Natural killer cell (primary cell): ENCODE measurements at regions of chr17 and their contacts with region 1.

Region 1: DNA sequence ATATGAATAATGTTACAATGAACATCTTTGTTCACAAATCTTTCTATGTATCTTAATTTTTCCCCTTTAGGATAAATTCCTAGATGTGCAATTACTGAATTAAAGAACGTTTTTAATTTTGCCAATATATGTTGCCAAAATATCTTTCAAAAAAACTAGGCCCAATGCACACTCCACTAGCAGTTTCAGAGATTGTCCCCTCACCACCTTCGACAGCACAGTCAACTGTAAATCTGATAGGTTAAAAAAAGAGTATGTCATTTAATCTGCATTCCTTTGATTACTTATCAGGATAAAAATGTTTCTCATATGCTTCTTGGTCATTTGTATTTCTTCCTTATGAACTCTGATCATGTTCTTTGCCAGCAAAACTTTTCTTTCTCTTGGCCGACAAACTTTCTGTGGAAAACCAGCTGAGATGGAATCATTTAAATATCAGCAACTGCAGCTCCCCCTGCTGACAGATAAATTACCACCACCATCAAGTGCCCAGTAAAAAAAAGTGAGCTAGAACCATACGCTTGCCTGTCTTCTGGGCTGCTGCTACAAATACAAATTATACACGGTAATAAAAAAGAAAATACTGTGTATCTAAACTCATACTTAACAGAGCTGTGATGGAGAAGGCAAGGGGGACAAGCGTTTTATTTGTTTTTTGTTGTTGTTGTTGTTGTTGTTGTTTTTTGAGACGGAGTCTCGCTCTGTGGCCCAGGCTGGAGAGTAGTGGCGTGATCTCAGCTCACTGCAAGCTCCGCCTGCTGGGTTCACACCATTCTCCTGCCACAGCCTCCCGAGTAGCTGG is 19.6 kb upstream of the KANSL1 start:
- DNase-seq: peak; percentile 38 to 91
- ATAC-seq: peak; percentile 84 to 98 (median 94)
- H3K4me3 ChIP-seq: no peak overlapping the region
- H3K4me3 Mint-ChIP-seq: peak overlapping the region; percentile 79
- H3K27ac ChIP-seq: peak overlapping the region; percentile 51
- H3K27ac Mint-ChIP-seq: peak overlapping the region; percentile 79 to 90
- H3K4me1 ChIP-seq: no peaks in the 10 kb centered on the region
- H3K4me1 Mint-ChIP-seq: peaks cover 14 to 18% of the 10 kb centered on the region in 2 donors
- H3K27me3 ChIP-seq: no peaks in the 10 kb centered on the region
- H3K27me3 Mint-ChIP-seq: no peaks in the 10 kb centered on the region
- CTCF ChIP-seq: peak; percentile 75

Region 2: DNA sequence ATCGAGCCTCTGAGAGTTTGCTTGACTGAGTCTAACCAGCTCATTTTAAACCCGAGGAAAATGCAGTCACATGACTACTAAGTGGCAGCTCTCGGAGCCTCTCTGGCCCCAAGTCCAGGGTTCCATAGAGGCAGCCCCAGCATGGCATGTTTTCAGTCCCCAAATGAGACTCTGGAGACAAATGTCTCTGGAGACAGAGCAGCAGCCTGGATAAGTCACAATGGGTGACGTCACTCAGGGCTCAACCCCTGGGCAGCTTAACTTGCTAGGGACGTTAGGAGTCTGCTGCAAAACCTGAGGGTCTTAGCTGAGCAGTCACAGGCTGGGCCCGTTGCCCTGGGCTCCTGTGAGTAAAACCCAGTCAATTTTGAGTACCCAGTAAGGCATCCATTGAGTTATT is 220.7 kb before region 1 on chr17:
- intact Hi-C with region 1: no loop called
- DNase-seq: no peak
- ATAC-seq: no peak
- H3K4me3 ChIP-seq: no peak overlapping the region
- H3K4me3 Mint-ChIP-seq: no peak overlapping the region
- H3K27ac ChIP-seq: no peak overlapping the region
- H3K27ac Mint-ChIP-seq: no peak overlapping the region
- H3K4me1 ChIP-seq: no peaks in the 10 kb centered on the region
- H3K4me1 Mint-ChIP-seq: no peaks in the 10 kb centered on the region
- H3K27me3 ChIP-seq: no peaks in the 10 kb centered on the region
- H3K27me3 Mint-ChIP-seq: peaks cover 0 to 4% of the 10 kb centered on the region in 2 donors
- CTCF ChIP-seq: no peak

Region 3: GRCh38 chr17:46002311-46002972 is 210.4 kb before region 1 on chr17:
- intact Hi-C with region 1: loop called (anchors 1 kb)
- DNase-seq: peak; percentile 72 to 85
- ATAC-seq: peak; percentile 92 to 99 (median 98)
- H3K4me3 ChIP-seq: no peak overlapping the region
- H3K4me3 Mint-ChIP-seq: no peak overlapping the region
- H3K27ac ChIP-seq: no peak overlapping the region
- H3K27ac Mint-ChIP-seq: no peak overlapping the region
- H3K4me1 ChIP-seq: peaks cover 7% of the 10 kb centered on the region
- H3K4me1 Mint-ChIP-seq: peaks cover 6 to 16% of the 10 kb centered on the region in 2 donors
- H3K27me3 ChIP-seq: no peaks in the 10 kb centered on the region
- H3K27me3 Mint-ChIP-seq: no peaks in the 10 kb centered on the region
- CTCF ChIP-seq: peak; percentile 89

Region 4: DNA sequence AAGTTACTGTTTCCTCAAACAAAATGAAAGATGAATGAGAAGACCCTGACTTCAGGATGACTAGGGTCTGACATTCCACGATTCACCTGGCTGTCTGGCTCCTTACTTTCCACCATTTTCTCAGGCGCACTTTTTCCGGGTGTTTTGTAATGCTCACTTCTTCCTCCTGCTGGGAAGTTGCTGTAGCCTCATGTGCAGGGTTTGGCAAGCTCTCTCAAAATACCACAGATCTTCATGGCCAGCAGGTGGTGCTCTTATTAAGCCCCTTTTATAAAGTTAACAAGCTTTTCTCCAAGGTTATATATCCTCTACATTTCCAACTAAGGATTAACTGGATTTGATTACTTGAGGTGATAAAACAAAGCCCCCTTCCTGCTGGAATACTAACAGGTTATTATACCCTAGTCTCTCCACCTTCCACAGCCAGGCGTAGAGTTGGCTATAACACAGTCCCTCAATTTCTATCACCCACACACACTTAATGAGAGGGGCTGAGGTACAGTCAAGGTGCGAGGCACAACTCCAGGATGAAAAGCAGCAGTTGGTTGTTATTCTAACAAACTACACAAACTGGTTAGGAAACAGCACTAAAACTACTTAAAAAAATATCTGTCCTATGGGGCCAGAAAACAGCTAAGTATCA is 168.4 kb before region 1 on chr17:
- intact Hi-C with region 1: loop called (anchors 1 kb)
- DNase-seq: peak; percentile 27 to 78
- ATAC-seq: peak; percentile 55 to 86 (median 78)
- H3K4me3 ChIP-seq: no peak overlapping the region
- H3K4me3 Mint-ChIP-seq: no peak overlapping the region
- H3K27ac ChIP-seq: no peak overlapping the region
- H3K27ac Mint-ChIP-seq: peak overlapping the region; percentile 70 to 76
- H3K4me1 ChIP-seq: no peaks in the 10 kb centered on the region
- H3K4me1 Mint-ChIP-seq: peaks cover 16 to 20% of the 10 kb centered on the region in 2 donors
- H3K27me3 ChIP-seq: no peaks in the 10 kb centered on the region
- H3K27me3 Mint-ChIP-seq: no peaks in the 10 kb centered on the region
- CTCF ChIP-seq: peak; percentile 74